ENCODE measurements at regions of chr6 and their contacts with region 1.

Region 1: GRCh38 chr6:129598244-129599187 is 111.5 kb downstream of the ARHGAP18 start:
- DNase-seq: no peak
- H3K4me3 ChIP-seq: no peak overlapping the region
- H3K27ac ChIP-seq: no peak overlapping the region
- H3K4me1 ChIP-seq: peaks cover 3% of the 10 kb centered on the region
- H3K27me3 ChIP-seq: no peaks in the 10 kb centered on the region
- CTCF ChIP-seq: peak; percentile 88

Region 2: GRCh38 chr6:129730477-129731165 is 132.1 kb after region 1 on chr6:
- intact Hi-C with region 1: loop called (anchors 5 kb)
- DNase-seq: no peak
- H3K4me3 ChIP-seq: no peak overlapping the region
- H3K27ac ChIP-seq: no peak overlapping the region
- H3K4me1 ChIP-seq: peaks cover 16% of the 10 kb centered on the region
- H3K27me3 ChIP-seq: no peaks in the 10 kb centered on the region
- CTCF ChIP-seq: peak; percentile 70

Region 3: DNA sequence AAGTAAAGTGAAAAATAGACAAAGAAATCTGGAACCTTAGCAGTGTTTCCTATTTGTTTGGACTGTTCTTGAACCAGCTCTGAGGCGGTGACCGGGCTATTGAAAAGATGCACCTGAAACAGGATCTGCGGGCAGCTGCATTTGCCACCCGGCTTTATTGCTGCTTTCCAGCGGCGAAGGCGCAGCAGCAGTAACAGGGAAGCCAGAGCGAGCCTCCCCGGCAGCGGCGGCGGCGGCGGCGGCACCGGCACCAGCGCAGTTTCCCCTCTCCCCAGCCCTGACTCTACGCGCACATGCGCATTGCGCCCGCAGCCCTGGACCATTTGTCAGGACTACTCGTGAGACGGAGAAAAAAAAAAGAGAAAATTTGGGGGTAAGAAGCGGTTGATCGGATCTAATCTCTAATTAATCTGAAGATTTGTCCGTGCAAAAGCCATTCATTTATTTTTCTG is 419.8 kb after region 1 on chr6 and contains the start of gene L3MBTL3:
- intact Hi-C with region 1: loop called (anchors 10 kb)
- DNase-seq: peak; percentile 89
- H3K4me3 ChIP-seq: peak within 1 kb of the TSS; percentile 90
- H3K27ac ChIP-seq: peak within 1 kb of the TSS; percentile 57
- H3K4me1 ChIP-seq: peaks cover 23% of the 10 kb centered on the region
- H3K27me3 ChIP-seq: no peaks in the 10 kb centered on the region
- CTCF ChIP-seq: no peak
- total RNA-seq, gene L3MBTL3: 3.2 TPM

Measured in left ventricle myocardium inferior (tissue), 1 donor.